AG04449 (cell line): ENCODE measurements at regions of chr17 and their contacts with region 1.

Region 1: GRCh38 chr17:47978324-47978723 is 7.4 kb downstream of the CDK5RAP3 start:
- DNase-seq: no peak
- H3K4me3 ChIP-seq: no peak overlapping the region
- CTCF ChIP-seq: peak; percentile 74

Region 2: GRCh38 chr17:47821424-47822391 is 156.6 kb before region 1 on chr17 and contains the start of gene OSBPL7:
- CTCF ChIA-PET with region 1: no interaction called
- POLR2A ChIA-PET with region 1: no interaction called
- DNase-seq: peak; percentile 36
- H3K4me3 ChIP-seq: peak within 1 kb of the TSS; percentile 87
- CTCF ChIP-seq: peak; percentile 48

Region 3: GRCh38 chr17:47949136-47949759 is 29.1 kb before region 1 on chr17:
- CTCF ChIA-PET with region 1: interaction called, 775 read pairs
- POLR2A ChIA-PET with region 1: no interaction called
- DNase-seq: no peak
- H3K4me3 ChIP-seq: peak overlapping the region; percentile 43
- CTCF ChIP-seq: peak; percentile 92

Region 4: DNA sequence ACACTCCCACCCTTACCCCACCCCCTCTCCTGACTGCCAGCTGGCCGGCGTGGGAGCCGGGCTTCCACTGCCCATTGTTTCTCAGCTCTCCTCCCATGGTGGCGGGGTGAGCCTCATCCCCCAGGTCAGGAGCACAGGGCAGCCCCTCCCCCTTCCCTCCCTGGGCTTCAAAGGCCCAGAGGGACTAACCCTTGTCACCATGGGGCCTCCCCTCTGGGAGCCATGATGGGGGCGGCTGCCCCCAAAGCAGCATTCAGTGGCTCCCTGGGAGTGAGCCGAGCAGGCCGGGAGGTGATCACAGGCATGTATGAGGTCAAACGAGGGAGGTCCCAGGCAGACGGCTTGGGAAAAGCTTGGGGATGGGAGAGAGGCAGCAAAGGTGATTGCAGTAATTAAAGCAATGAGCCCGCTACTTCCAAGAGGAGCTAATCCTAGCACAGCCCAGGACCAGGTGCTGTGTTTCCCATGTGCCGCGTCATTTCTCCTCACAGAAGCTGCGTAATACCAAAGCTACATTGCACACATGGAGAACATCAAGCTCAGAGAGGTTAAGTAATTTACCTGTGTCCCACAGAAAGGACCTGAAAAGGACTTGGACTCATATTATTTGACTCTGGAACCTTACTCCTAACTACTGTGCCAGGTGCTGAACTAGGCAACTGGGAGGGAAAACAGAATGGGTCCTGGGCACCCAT is 17.1 kb after region 1 on chr17:
- CTCF ChIA-PET with region 1: interaction called, 42 read pairs
- POLR2A ChIA-PET with region 1: no interaction called
- DNase-seq: no peak
- H3K4me3 ChIP-seq: no peak overlapping the region
- CTCF ChIP-seq: no peak

Region 5: GRCh38 chr17:48002266-48002915 is 24.1 kb after region 1 on chr17:
- CTCF ChIA-PET with region 1: interaction called, 38 read pairs
- POLR2A ChIA-PET with region 1: no interaction called
- DNase-seq: no peak
- H3K4me3 ChIP-seq: no peak overlapping the region
- CTCF ChIP-seq: no peak

Region 6: DNA sequence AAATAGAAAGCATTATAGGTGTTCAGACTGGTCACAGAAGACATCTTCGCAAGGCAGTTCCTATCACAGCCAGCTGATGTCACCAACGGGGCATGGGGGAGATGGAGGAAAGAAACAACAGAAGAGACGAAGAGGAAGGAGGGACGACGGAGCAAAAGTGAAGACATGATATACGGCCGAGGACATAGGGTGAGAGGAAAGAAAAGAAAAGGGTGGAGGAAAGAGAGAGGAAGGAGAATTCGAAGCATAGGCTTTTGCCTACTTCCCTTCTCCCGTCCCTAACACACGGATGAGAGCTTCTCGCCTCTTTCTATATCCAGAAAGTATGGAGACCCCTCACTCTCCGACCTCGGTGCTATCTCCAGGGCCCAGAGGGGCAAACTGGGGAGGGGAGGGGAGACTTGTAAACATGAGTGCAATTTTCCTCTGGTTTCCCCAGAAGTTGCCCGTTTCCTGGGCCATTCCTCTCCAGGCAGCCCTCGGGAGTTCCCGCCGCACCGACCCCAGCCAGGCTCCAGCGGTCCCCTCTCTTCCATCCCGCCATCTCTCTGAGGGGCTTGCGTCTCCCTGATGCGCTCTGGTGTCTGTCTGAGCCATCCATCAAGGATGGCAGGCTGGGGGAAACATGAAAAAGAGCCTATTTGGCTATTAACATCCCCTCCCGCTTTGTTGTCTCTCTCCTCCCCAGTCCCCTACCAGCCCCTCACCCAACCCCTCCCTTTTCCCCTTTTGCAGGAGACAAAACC is 33.3 kb after region 1 on chr17:
- CTCF ChIA-PET with region 1: interaction called, 600 read pairs
- POLR2A ChIA-PET with region 1: no interaction called
- DNase-seq: no peak
- H3K4me3 ChIP-seq: peak overlapping the region; percentile 54
- CTCF ChIP-seq: peak; percentile 68